ENCODE measurements at regions of chr18 and their contacts with region 1.

Region 1: DNA sequence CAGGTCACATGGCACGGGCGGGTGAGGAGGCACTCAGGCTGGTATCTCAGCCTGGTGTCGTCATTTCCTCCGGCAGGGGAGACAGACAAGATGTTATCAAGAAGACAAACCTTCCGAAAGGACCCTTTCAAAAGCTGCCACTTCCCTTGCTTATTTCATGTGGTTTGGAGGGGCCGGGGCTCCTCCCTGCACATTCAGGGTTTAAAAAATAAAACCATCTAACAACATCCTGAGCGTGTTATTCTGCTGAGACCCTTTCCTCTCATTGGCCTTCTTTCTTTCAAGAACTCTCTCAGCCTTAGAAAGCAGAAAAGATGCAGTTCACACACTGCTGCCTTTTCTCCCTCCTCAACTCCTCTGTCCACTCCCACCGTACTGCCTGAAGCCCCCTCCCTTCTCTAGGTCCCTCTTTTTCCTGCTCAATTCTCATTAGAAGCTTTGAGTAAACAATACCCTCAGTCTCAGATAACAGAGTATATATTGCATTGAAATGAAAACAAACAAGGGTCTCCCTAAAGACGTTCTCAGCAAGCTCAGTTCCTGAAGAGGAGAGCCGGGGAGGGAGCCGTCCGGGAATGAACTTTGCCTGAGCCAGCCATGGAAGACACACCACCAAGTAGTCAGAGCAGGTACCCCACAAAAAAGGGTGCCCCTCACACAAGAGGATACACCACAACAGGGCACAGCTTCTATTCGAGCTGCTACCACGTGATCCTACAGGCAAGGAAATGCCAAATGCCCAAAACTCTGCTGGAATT is 9.7 kb downstream of the SMAD7 start:
- DNase-seq: no peak
- H3K4me3 ChIP-seq: no peak overlapping the region
- CTCF ChIP-seq: no peak

Region 2: DNA sequence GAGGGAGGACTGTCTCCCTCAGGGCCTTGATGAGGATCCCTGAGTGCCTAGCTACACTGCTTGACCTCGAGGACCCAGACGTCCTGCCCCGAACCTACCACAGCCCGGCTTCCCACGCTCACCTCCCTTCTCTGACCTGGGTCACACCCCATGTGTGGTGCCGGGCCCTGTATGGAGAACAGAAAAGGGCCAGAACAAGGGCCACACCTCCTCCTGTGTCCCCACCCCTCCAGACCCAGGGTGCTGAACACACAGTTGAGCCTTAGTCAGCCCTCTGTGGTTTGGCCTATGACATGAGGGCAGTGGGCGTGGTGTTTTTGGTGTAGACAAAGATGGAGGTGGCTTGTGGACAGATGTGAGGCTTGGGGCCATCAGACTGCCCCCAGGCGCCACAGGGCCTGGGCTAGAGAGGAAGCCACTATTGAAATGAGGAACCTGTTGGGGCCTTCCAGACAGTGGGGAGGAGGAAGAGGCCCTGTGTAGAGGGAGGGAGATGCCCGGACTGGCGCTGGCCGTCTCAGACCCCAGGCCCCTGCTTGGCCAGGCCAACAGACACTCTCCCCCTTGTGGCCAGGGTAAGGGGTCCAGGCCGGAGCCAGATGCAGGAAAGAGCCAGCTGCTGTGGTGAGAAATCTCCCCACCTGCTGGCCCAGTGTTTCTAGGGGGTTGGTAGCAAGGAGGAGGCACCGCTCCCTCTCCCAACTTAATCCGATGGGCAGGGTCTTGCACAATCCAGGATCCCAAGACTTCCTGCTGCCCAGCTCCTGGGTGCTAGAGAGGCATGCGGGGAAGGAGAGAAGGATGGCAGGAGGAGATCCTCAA is 44.1 kb before region 1 on chr18:
- in situ Hi-C with region 1: no loop called
- DNase-seq: no peak
- H3K4me3 ChIP-seq: no peak overlapping the region
- CTCF ChIP-seq: peak; percentile 27

Region 3: GRCh38 chr18:48975649-48976204 is 34.7 kb after region 1 on chr18:
- in situ Hi-C with region 1: no loop called
- DNase-seq: no peak
- H3K4me3 ChIP-seq: peak overlapping the region; percentile 56
- CTCF ChIP-seq: no peak

Region 4: GRCh38 chr18:49013961-49014655 is 73.1 kb after region 1 on chr18:
- in situ Hi-C with region 1: loop called (anchors 5 kb)
- DNase-seq: no peak
- H3K4me3 ChIP-seq: no peak overlapping the region
- CTCF ChIP-seq: no peak